Activated CD4-positive, alpha-beta memory T cell treated with anti-CD3 and anti-CD28 coated beads, Interleukin-2, amount 10 ng/mL, durations not matched to agents 7 days and 5 days (primary cell): ENCODE measurements at regions of chr17 and their contacts with region 1.

Region 1: GRCh38 chr17:32486111-32486700 is 587 bp upstream of the CDK5R1 start:
- DNase-seq: peak; percentile 67
- H3K4me3 Mint-ChIP-seq: peak overlapping the region; percentile 63
- H3K27ac Mint-ChIP-seq: no peak overlapping the region
- H3K4me1 Mint-ChIP-seq: peaks cover 42% of the 10 kb centered on the region
- H3K27me3 Mint-ChIP-seq: no peaks in the 10 kb centered on the region

Region 2: GRCh38 chr17:32429598-32429997 is 56.6 kb before region 1 on chr17:
- CTCF ChIA-PET with region 1: no interaction called
- POLR2A ChIA-PET with region 1: no interaction called
- DNase-seq: no peak
- H3K4me3 Mint-ChIP-seq: no peak overlapping the region
- H3K27ac Mint-ChIP-seq: no peak overlapping the region
- H3K4me1 Mint-ChIP-seq: no peaks in the 10 kb centered on the region
- H3K27me3 Mint-ChIP-seq: no peaks in the 10 kb centered on the region

Region 3: GRCh38 chr17:32503251-32504165 is 17.3 kb after region 1 on chr17:
- CTCF ChIA-PET with region 1: interaction called, 3 read pairs
- POLR2A ChIA-PET with region 1: interaction called, 13 read pairs
- DNase-seq: peak; percentile 67
- H3K4me3 Mint-ChIP-seq: peak overlapping the region; percentile 59
- H3K27ac Mint-ChIP-seq: peak overlapping the region; percentile 100
- H3K4me1 Mint-ChIP-seq: peaks cover 42% of the 10 kb centered on the region
- H3K27me3 Mint-ChIP-seq: no peaks in the 10 kb centered on the region

Region 4: GRCh38 chr17:32615326-32615725 is 129.1 kb after region 1 on chr17:
- CTCF ChIA-PET with region 1: no interaction called
- POLR2A ChIA-PET with region 1: no interaction called
- DNase-seq: no peak
- H3K4me3 Mint-ChIP-seq: no peak overlapping the region
- H3K27ac Mint-ChIP-seq: no peak overlapping the region
- H3K4me1 Mint-ChIP-seq: no peaks in the 10 kb centered on the region
- H3K27me3 Mint-ChIP-seq: no peaks in the 10 kb centered on the region